GM12878 (cell line): ENCODE measurements at regions of chr1 and their contacts with region 1.

Region 1: DNA sequence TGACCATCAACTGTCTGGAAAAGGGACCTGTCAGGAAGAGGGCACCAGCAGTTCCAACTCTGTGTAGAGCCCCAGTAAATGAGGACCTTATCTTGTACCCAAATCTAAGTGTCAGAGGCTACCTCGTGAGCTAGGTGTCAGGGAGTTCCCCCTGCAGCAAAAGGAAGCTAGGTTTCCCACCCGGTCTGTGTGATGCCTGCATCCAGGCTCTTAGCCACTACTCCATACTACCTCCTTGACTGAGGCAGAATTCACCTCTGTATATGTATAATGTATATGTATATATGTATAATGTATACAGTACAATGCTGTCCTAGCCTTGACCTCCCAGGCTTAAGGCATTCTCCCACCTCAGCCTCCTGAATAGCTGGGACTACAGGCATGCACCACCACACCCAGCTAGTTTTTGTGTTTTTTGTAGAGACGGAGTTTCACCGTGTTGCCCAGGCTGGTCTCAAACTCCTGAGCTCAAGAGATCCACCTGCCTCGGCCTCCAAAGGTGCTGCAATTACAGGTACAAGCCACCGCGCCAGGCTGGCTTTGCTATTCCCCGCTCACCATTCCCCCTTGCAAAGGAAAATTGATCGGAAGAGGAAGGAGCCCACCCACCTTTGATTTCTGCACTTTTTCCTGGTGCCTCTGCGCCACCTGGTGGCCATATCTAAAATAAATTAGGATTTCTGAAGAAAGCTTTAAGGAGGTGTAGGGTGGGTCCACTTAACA is 15.7 kb upstream of the LUZP1 start:
- DNase-seq: no peak
- ATAC-seq: peak; percentile 76
- H3K4me3 ChIP-seq: no peak overlapping the region
- H3K27ac ChIP-seq: no peak overlapping the region
- H3K4me1 ChIP-seq: no peaks in the 10 kb centered on the region; the same call in 1 of the 2 replicates
- H3K27me3 ChIP-seq: no peaks in the 10 kb centered on the region
- CTCF ChIP-seq: peak; percentile 51 to 76 (median 52); a peak in 5 of 6 replicates
- EP300 ChIP-seq: no peak
- POLR2A ChIP-seq: no peak
- RAD21 ChIP-seq: peak; percentile 97

Region 2: GRCh38 chr1:22709891-22710700 is 474.3 kb before region 1 on chr1:
- CTCF ChIA-PET with region 1: no interaction called
- POLR2A ChIA-PET with region 1: no interaction called
- RAD21 ChIA-PET with region 1: no interaction called
- SMC1A ChIA-PET with region 1: no interaction called
- in situ Hi-C with region 1: no loop called
- intact Hi-C with region 1: no loop called
- DNase-seq: no peak
- ATAC-seq: no peak
- H3K4me3 ChIP-seq: no peak overlapping the region
- H3K27ac ChIP-seq: no peak overlapping the region
- H3K4me1 ChIP-seq: peaks cover 29% of the 10 kb centered on the region
- H3K27me3 ChIP-seq: peaks cover 3 to 21% of the 10 kb centered on the region in 2 experiments
- CTCF ChIP-seq: no peak
- EP300 ChIP-seq: no peak
- POLR2A ChIP-seq: no peak
- RAD21 ChIP-seq: no peak

Region 3: DNA sequence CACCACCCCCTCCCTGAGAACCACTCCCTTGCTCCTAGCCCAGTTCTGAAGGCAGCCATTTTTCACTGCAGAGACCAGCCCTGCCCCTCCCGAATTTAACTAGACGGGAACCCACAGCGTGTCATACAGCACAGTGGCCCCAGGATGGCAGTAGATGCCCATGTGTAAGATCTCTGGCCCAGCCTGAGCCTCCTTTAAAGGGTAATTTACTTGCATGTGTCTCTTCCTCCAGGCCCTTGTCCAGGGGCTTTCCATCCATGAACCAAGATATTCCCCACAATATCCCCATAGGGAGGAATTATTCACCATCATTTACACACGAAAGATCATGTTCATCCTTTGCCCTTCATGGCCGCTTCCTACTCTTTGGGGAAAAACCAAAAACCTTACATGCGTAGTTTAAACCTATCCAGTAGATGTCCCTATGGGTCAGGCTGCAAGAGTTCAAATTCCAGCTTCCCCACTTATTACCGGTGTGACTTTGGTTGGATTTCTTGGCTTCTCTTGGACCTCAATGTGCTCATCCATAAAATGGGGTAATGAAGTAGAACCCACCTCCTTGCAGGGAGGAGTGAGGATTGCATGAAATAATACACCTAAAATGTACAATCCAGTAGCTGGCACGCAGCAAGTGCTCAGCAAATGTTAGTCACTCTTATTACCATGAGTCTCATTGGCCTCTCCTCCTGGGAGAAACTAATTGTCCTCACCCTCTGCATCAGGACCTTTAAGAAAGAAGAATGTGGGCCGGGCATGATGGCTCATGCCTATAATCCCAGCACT is 207.7 kb before region 1 on chr1:
- CTCF ChIA-PET with region 1: interaction called, 114 read pairs
- POLR2A ChIA-PET with region 1: interaction called, 6 read pairs
- RAD21 ChIA-PET with region 1: interaction called, 24 read pairs
- SMC1A ChIA-PET with region 1: interaction called, 14 read pairs
- in situ Hi-C with region 1: loop called (anchors 5 kb)
- intact Hi-C with region 1: loop called (anchors 1 kb)
- DNase-seq: peak; percentile 40
- ATAC-seq: peak; percentile 99
- H3K4me3 ChIP-seq: no peak overlapping the region
- H3K27ac ChIP-seq: no peak overlapping the region
- H3K4me1 ChIP-seq: no peaks in the 10 kb centered on the region
- H3K27me3 ChIP-seq: peaks cover 0 to under 1% of the 10 kb centered on the region in 2 experiments; a peak in 2 of 4 replicates
- CTCF ChIP-seq: peak; percentile 88 to 95 (median 90)
- EP300 ChIP-seq: no peak
- POLR2A ChIP-seq: no peak
- RAD21 ChIP-seq: peak; percentile 95

Region 4: GRCh38 chr1:23092447-23092846 is 91.9 kb before region 1 on chr1:
- CTCF ChIA-PET with region 1: interaction called, 961 read pairs
- POLR2A ChIA-PET with region 1: interaction called, 31 read pairs
- RAD21 ChIA-PET with region 1: interaction called, 71 read pairs
- SMC1A ChIA-PET with region 1: interaction called, 455 read pairs
- in situ Hi-C with region 1: loop called (anchors 5 kb)
- intact Hi-C with region 1: no loop called
- DNase-seq: no peak
- ATAC-seq: no peak
- H3K4me3 ChIP-seq: no peak overlapping the region
- H3K27ac ChIP-seq: no peak overlapping the region
- H3K4me1 ChIP-seq: no peaks in the 10 kb centered on the region
- H3K27me3 ChIP-seq: no peaks in the 10 kb centered on the region
- CTCF ChIP-seq: no peak
- EP300 ChIP-seq: no peak
- POLR2A ChIP-seq: no peak
- RAD21 ChIP-seq: no peak

Region 5: GRCh38 chr1:23114424-23115079 is 69.8 kb before region 1 on chr1:
- CTCF ChIA-PET with region 1: interaction called, 53 read pairs
- POLR2A ChIA-PET with region 1: interaction called, 5 read pairs
- RAD21 ChIA-PET with region 1: interaction called, 24 read pairs
- SMC1A ChIA-PET with region 1: interaction called, 199 read pairs
- in situ Hi-C with region 1: no loop called
- intact Hi-C with region 1: no loop called
- DNase-seq: no peak
- ATAC-seq: peak; percentile 59
- H3K4me3 ChIP-seq: peak overlapping the region; percentile 9; the same call in 1 of the 2 replicates
- H3K27ac ChIP-seq: peak overlapping the region; percentile 64
- H3K4me1 ChIP-seq: peaks cover 54% of the 10 kb centered on the region
- H3K27me3 ChIP-seq: no peaks in the 10 kb centered on the region
- CTCF ChIP-seq: no peak
- EP300 ChIP-seq: no peak
- POLR2A ChIP-seq: no peak
- RAD21 ChIP-seq: no peak

Region 6: GRCh38 chr1:23163395-23163794 is 21.0 kb before region 1 on chr1:
- CTCF ChIA-PET with region 1: interaction called, 14 read pairs
- POLR2A ChIA-PET with region 1: no interaction called
- RAD21 ChIA-PET with region 1: interaction called, 17 read pairs
- SMC1A ChIA-PET with region 1: interaction called, 17 read pairs
- in situ Hi-C with region 1: no loop called
- intact Hi-C with region 1: no loop called
- DNase-seq: no peak
- ATAC-seq: no peak
- H3K4me3 ChIP-seq: no peak overlapping the region
- H3K27ac ChIP-seq: no peak overlapping the region
- H3K4me1 ChIP-seq: no peaks in the 10 kb centered on the region
- H3K27me3 ChIP-seq: no peaks in the 10 kb centered on the region
- CTCF ChIP-seq: no peak
- EP300 ChIP-seq: no peak
- POLR2A ChIP-seq: no peak
- RAD21 ChIP-seq: no peak

Region 7: GRCh38 chr1:23210351-23210785 is 26.0 kb after region 1 on chr1:
- CTCF ChIA-PET with region 1: interaction called, 10 read pairs
- POLR2A ChIA-PET with region 1: no interaction called
- RAD21 ChIA-PET with region 1: interaction called, 3 read pairs
- SMC1A ChIA-PET with region 1: interaction called, 4 read pairs
- in situ Hi-C with region 1: no loop called
- intact Hi-C with region 1: no loop called
- DNase-seq: no peak
- ATAC-seq: peak; percentile 54; the same call in 2 of the 3 replicates
- H3K4me3 ChIP-seq: no peak overlapping the region
- H3K27ac ChIP-seq: no peak overlapping the region
- H3K4me1 ChIP-seq: peaks cover 3% of the 10 kb centered on the region
- H3K27me3 ChIP-seq: peaks cover 0 to 1% of the 10 kb centered on the region in 2 experiments; a peak in 1 of 4 replicates
- CTCF ChIP-seq: 0 out of 6 replicates have a peak, but pooled peaks of 1 of the 3 experiments have one; percentile 2
- EP300 ChIP-seq: no peak
- POLR2A ChIP-seq: no peak
- RAD21 ChIP-seq: peak; percentile 22; the same call in 1 of the 2 replicates

Region 8: GRCh38 chr1:23691499-23692307 is 507.3 kb after region 1 on chr1 and contains the start of gene RPL11:
- CTCF ChIA-PET with region 1: no interaction called
- POLR2A ChIA-PET with region 1: no interaction called
- RAD21 ChIA-PET with region 1: no interaction called
- SMC1A ChIA-PET with region 1: no interaction called
- in situ Hi-C with region 1: no loop called
- intact Hi-C with region 1: no loop called
- DNase-seq: peak; percentile 84
- ATAC-seq: peak; percentile 94
- H3K4me3 ChIP-seq: peak within 1 kb of the TSS; percentile 87
- H3K27ac ChIP-seq: peak within 1 kb of the TSS; percentile 95
- H3K4me1 ChIP-seq: peaks cover 8% of the 10 kb centered on the region
- H3K27me3 ChIP-seq: no peaks in the 10 kb centered on the region
- CTCF ChIP-seq: peak; percentile 81 to 85 (median 84)
- EP300 ChIP-seq: 0 out of 4 replicates have a peak, but pooled peaks of 1 of the 2 experiments have one; percentile 17
- POLR2A ChIP-seq: peak; percentile 98
- RAD21 ChIP-seq: peak; percentile 56
- polyA plus RNA-seq, gene RPL11: 2,510 to 2,532 TPM